Body of pancreas (tissue), 4 donors: ENCODE measurements at regions of chr4 and their contacts with region 1.

Region 1: DNA sequence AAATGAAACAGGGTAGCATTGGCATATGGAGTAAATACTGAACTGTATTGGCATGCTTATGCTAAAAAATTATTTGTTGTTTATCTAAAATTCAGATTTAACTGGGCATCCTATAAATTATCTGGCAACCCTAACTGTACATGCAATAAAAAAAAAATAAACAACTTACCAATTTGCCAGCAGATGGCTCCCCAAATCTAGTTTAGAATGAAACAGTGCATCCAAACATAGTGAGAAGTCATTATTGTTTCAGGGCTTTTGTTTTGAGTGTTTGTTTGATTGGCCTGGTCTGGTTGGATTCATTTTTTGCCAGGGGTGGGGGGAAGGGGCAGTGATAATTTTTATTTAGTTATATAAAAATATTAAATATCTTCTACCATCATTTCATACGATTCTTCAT is 12.8 kb upstream of the NSUN7 start:
- DNase-seq: no peak
- ATAC-seq: no peak
- H3K4me3 ChIP-seq: no peak overlapping the region
- H3K27ac ChIP-seq: no peak overlapping the region
- H3K4me1 ChIP-seq: peaks cover 9% of the 10 kb centered on the region
- H3K27me3 ChIP-seq: no peaks in the 10 kb centered on the region
- CTCF ChIP-seq: peak in 5 of 7 experiments; percentile 22 to 43 (median 40)
- POLR2A ChIP-seq: no peak

Region 2: GRCh38 chr4:40897557-40898203 is 160.8 kb after region 1 on chr4:
- intact Hi-C with region 1: loop called (anchors 5 kb)
- DNase-seq: peak; percentile 77 to 84 (median 80)
- ATAC-seq: peak; percentile 82
- H3K4me3 ChIP-seq: no peak overlapping the region
- H3K27ac ChIP-seq: no peak overlapping the region
- H3K4me1 ChIP-seq: peaks cover 8% of the 10 kb centered on the region
- H3K27me3 ChIP-seq: no peaks in the 10 kb centered on the region
- CTCF ChIP-seq: peak; percentile 60 to 84 (median 72)
- POLR2A ChIP-seq: no peak